ENCODE measurements at regions of chr2 and their contacts with region 1.

Region 1: DNA sequence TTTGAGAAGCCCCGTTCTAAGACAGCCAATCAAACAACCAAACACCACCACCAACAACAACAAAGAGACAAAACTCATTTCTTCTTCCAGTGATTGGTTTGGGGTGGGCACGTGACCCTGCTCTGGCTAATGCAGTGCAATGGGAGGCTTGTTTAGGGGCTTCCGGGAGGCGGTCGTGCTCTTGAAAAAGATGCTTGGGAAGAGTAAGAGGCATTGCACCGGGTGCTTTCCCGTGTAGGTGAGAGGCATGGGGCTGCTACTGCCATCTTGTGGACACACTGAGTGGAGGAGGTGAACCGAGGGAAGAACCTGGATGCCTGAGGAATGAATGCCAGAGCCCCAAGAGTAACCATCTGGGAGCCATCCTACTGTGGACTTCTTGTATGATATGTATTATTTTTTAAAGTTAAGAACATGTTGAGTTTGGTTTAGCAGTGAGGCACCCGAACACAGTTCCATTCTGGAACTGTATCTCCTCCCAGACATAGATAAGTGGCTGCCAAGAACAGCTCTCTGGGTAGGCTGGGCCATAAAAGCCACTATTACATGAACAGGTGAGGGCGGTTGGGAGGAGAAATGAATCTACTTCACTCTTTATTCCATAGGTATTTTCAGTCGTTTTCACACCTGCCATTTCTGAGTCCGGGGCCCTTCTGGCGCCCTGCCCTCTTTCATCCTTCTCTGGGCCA is 19.1 kb upstream of the ARHGAP25 start:
- DNase-seq: no peak
- H3K4me3 Mint-ChIP-seq: no peak overlapping the region
- H3K27ac Mint-ChIP-seq: peak overlapping the region; percentile 60
- H3K4me1 Mint-ChIP-seq: peaks cover 73% of the 10 kb centered on the region
- H3K27me3 Mint-ChIP-seq: no peaks in the 10 kb centered on the region

Region 2: GRCh38 chr2:68594674-68595492 is 120.6 kb before region 1 on chr2:
- intact Hi-C with region 1: loop called (anchors 5 kb)
- DNase-seq: peak; percentile 31
- H3K4me3 Mint-ChIP-seq: no peak overlapping the region
- H3K27ac Mint-ChIP-seq: no peak overlapping the region
- H3K4me1 Mint-ChIP-seq: peaks cover 9% of the 10 kb centered on the region
- H3K27me3 Mint-ChIP-seq: peaks cover 13% of the 10 kb centered on the region

Region 3: GRCh38 chr2:68726608-68727367 is 11.3 kb after region 1 on chr2:
- intact Hi-C with region 1: loop called (anchors 1 kb)
- DNase-seq: peak; percentile 77
- H3K4me3 Mint-ChIP-seq: no peak overlapping the region
- H3K27ac Mint-ChIP-seq: peak overlapping the region; percentile 6
- H3K4me1 Mint-ChIP-seq: peaks cover 66% of the 10 kb centered on the region
- H3K27me3 Mint-ChIP-seq: no peaks in the 10 kb centered on the region

Region 4: GRCh38 chr2:68774569-68775271 is 59.2 kb after region 1 on chr2:
- intact Hi-C with region 1: loop called (anchors 1 kb)
- DNase-seq: peak; percentile 52
- H3K4me3 Mint-ChIP-seq: peak overlapping the region; percentile 77
- H3K27ac Mint-ChIP-seq: peak overlapping the region; percentile 86
- H3K4me1 Mint-ChIP-seq: peaks cover 83% of the 10 kb centered on the region
- H3K27me3 Mint-ChIP-seq: no peaks in the 10 kb centered on the region

Region 5: GRCh38 chr2:68796294-68796905 is 80.9 kb after region 1 on chr2:
- intact Hi-C with region 1: no loop called
- DNase-seq: no peak
- H3K4me3 Mint-ChIP-seq: no peak overlapping the region
- H3K27ac Mint-ChIP-seq: peak overlapping the region; percentile 47
- H3K4me1 Mint-ChIP-seq: peaks cover 48% of the 10 kb centered on the region
- H3K27me3 Mint-ChIP-seq: no peaks in the 10 kb centered on the region

Region 6: GRCh38 chr2:69054431-69054830 is 338.9 kb after region 1 on chr2:
- intact Hi-C with region 1: loop called (anchors 10 kb)
- DNase-seq: no peak
- H3K4me3 Mint-ChIP-seq: no peak overlapping the region
- H3K27ac Mint-ChIP-seq: peak overlapping the region; percentile 62
- H3K4me1 Mint-ChIP-seq: peaks cover 24% of the 10 kb centered on the region
- H3K27me3 Mint-ChIP-seq: peaks cover 47% of the 10 kb centered on the region